ENCODE measurements at regions of chr4 and their contacts with region 1.

Region 1: DNA sequence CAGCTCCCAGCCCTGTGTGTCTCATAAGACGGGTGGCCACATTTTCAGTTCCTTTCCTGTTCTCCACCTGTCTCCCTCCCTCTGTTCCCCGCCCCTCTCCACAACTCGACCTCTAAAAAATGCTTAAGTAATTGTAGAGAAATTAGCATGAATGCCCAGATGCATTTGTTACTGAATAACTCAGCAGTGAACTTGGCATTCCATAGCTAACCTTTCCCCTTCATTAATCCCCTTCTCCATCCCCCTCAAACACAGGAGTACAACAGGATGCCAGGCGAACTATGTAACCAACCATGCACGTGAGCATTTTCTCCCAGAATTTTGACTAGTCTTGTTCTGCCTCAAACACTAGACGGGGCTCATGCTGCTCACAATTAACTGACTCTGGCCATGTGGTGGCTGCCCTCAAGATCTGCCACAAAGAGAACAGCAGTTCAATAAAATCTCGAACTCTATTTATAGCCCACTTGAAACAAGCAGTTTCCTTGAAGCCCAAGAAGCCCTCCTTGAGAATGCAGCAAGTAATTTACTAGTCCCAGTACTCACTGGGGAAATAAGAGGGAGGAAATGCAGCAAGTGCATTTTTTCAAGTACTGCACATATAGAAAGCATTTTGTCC is 351.2 kb downstream of the ARHGAP24 start:
- DNase-seq: peak; percentile 67
- H3K4me3 Mint-ChIP-seq: peak overlapping the region; percentile 40
- H3K27ac Mint-ChIP-seq: peak overlapping the region; percentile 20
- H3K4me1 Mint-ChIP-seq: peaks cover 39% of the 10 kb centered on the region
- H3K27me3 Mint-ChIP-seq: no peaks in the 10 kb centered on the region
- CTCF ChIP-seq: no peak

Region 2: GRCh38 chr4:85798012-85798770 is 28.0 kb before region 1 on chr4:
- CTCF ChIA-PET with region 1: interaction called, 8 read pairs
- intact Hi-C with region 1: loop called (anchors 2 kb)
- DNase-seq: no peak
- H3K4me3 Mint-ChIP-seq: no peak overlapping the region
- H3K27ac Mint-ChIP-seq: no peak overlapping the region
- H3K4me1 Mint-ChIP-seq: peaks cover 8% of the 10 kb centered on the region
- H3K27me3 Mint-ChIP-seq: no peaks in the 10 kb centered on the region
- CTCF ChIP-seq: no peak

Region 3: GRCh38 chr4:85870298-85871083 is 44.3 kb after region 1 on chr4:
- CTCF ChIA-PET with region 1: no interaction called
- intact Hi-C with region 1: loop called (anchors 1 kb)
- DNase-seq: no peak
- H3K4me3 Mint-ChIP-seq: no peak overlapping the region
- H3K27ac Mint-ChIP-seq: peak overlapping the region; percentile 83
- H3K4me1 Mint-ChIP-seq: peaks cover 8% of the 10 kb centered on the region
- H3K27me3 Mint-ChIP-seq: no peaks in the 10 kb centered on the region
- CTCF ChIP-seq: no peak

Region 4: GRCh38 chr4:85909851-85910250 is 83.7 kb after region 1 on chr4:
- CTCF ChIA-PET with region 1: no interaction called
- intact Hi-C with region 1: loop called (anchors 5 kb)
- DNase-seq: peak; percentile 53
- H3K4me3 Mint-ChIP-seq: peak overlapping the region; percentile 44
- H3K27ac Mint-ChIP-seq: no peak overlapping the region
- H3K4me1 Mint-ChIP-seq: peaks cover 34% of the 10 kb centered on the region
- H3K27me3 Mint-ChIP-seq: no peaks in the 10 kb centered on the region
- CTCF ChIP-seq: no peak

Region 5: GRCh38 chr4:85928775-85929591 is 102.8 kb after region 1 on chr4:
- CTCF ChIA-PET with region 1: no interaction called
- intact Hi-C with region 1: loop called (anchors 1 kb)
- DNase-seq: peak; percentile 51
- H3K4me3 Mint-ChIP-seq: peak overlapping the region; percentile 70
- H3K27ac Mint-ChIP-seq: peak overlapping the region; percentile 81
- H3K4me1 Mint-ChIP-seq: peaks cover 31% of the 10 kb centered on the region
- H3K27me3 Mint-ChIP-seq: no peaks in the 10 kb centered on the region
- CTCF ChIP-seq: no peak

Region 6: GRCh38 chr4:85968945-85969819 is 143.0 kb after region 1 on chr4:
- CTCF ChIA-PET with region 1: interaction called, 5 read pairs
- intact Hi-C with region 1: loop called (anchors 1 kb)
- DNase-seq: no peak
- H3K4me3 Mint-ChIP-seq: no peak overlapping the region
- H3K27ac Mint-ChIP-seq: no peak overlapping the region
- H3K4me1 Mint-ChIP-seq: peaks cover 6% of the 10 kb centered on the region
- H3K27me3 Mint-ChIP-seq: no peaks in the 10 kb centered on the region
- CTCF ChIP-seq: no peak